Caco-2 (cell line): ENCODE measurements at regions of chrX and their contacts with region 1.

Region 1: GRCh38 chrX:1649621-1650020 is 34.8 kb downstream of the ASMT start:
- DNase-seq: no peak
- H3K4me3 ChIP-seq: no peak overlapping the region
- H3K4me3 Mint-ChIP-seq: no peak overlapping the region
- H3K27ac Mint-ChIP-seq: no peak overlapping the region
- H3K4me1 ChIP-seq: no peaks in the 10 kb centered on the region
- H3K4me1 Mint-ChIP-seq: no peaks in the 10 kb centered on the region
- H3K27me3 ChIP-seq: no peaks in the 10 kb centered on the region
- H3K27me3 Mint-ChIP-seq: no peaks in the 10 kb centered on the region
- CTCF ChIP-seq: no peak

Region 2: GRCh38 chrX:920234-920799 is 729.3 kb before region 1 on chrX:
- CTCF ChIA-PET with region 1: no interaction called
- POLR2A ChIA-PET with region 1: no interaction called
- intact Hi-C with region 1: no loop called
- DNase-seq: no peak
- H3K4me3 ChIP-seq: no peak overlapping the region
- H3K4me3 Mint-ChIP-seq: no peak overlapping the region
- H3K27ac Mint-ChIP-seq: no peak overlapping the region
- H3K4me1 ChIP-seq: no peaks in the 10 kb centered on the region
- H3K4me1 Mint-ChIP-seq: no peaks in the 10 kb centered on the region
- H3K27me3 ChIP-seq: no peaks in the 10 kb centered on the region
- H3K27me3 Mint-ChIP-seq: no peaks in the 10 kb centered on the region
- CTCF ChIP-seq: no peak

Region 3: GRCh38 chrX:2627272-2627867 is 977.7 kb after region 1 on chrX:
- CTCF ChIA-PET with region 1: no interaction called
- POLR2A ChIA-PET with region 1: no interaction called
- intact Hi-C with region 1: loop called (anchors 1 kb)
- DNase-seq: peak; percentile 50 to 74
- H3K4me3 ChIP-seq: no peak overlapping the region
- H3K4me3 Mint-ChIP-seq: no peak overlapping the region
- H3K27ac Mint-ChIP-seq: no peak overlapping the region
- H3K4me1 ChIP-seq: no peaks in the 10 kb centered on the region
- H3K4me1 Mint-ChIP-seq: peaks cover 8% of the 10 kb centered on the region
- H3K27me3 ChIP-seq: no peaks in the 10 kb centered on the region
- H3K27me3 Mint-ChIP-seq: no peaks in the 10 kb centered on the region
- CTCF ChIP-seq: peak; percentile 68 to 71